Thyroid gland (tissue), 4 donors: ENCODE measurements at regions of chr9 and their contacts with region 1.

Region 1: GRCh38 chr9:132406554-132407122 is at the start of gene TTF1:
- DNase-seq: peak; percentile 88 to 91
- H3K4me3 ChIP-seq: peak within 1 kb of the TSS; percentile 55 to 97 (median 67)
- H3K27ac ChIP-seq: no peak within 1 kb of the TSS
- H3K4me1 ChIP-seq: peaks cover 27 to 36% of the 10 kb centered on the region in 2 donors
- H3K27me3 ChIP-seq: peaks cover under 1% of the 10 kb centered on the region
- CTCF ChIP-seq: no peak
- POLR2A ChIP-seq: peak in 1 of 2 donors; percentile 49
- total RNA-seq, gene TTF1: 10.8 to 19.3 (median 13.6) TPM

Region 2: GRCh38 chr9:132354637-132355355 is 51.8 kb before region 1 on chr9 and contains the start of gene SETX:
- intact Hi-C with region 1: loop called (anchors 5 kb)
- DNase-seq: peak; percentile 98 to 99
- H3K4me3 ChIP-seq: peak within 1 kb of the TSS; percentile 34 to 83 (median 76)
- H3K27ac ChIP-seq: peak within 1 kb of the TSS; percentile 93 to 95 (median 94)
- H3K4me1 ChIP-seq: peaks cover 34 to 39% of the 10 kb centered on the region in 2 donors
- H3K27me3 ChIP-seq: no peaks in the 10 kb centered on the region
- CTCF ChIP-seq: peak in 1 of 6 experiments; percentile 5
- POLR2A ChIP-seq: peak; percentile 83 to 98
- total RNA-seq, gene SETX: 132 to 192 (median 170) TPM

Region 3: GRCh38 chr9:132531187-132531586 is 124.5 kb after region 1 on chr9:
- intact Hi-C with region 1: no loop called
- DNase-seq: no peak
- H3K4me3 ChIP-seq: no peak overlapping the region
- H3K27ac ChIP-seq: no peak overlapping the region
- H3K4me1 ChIP-seq: no peaks in the 10 kb centered on the region
- H3K27me3 ChIP-seq: no peaks in the 10 kb centered on the region
- CTCF ChIP-seq: no peak
- POLR2A ChIP-seq: no peak

Region 4: DNA sequence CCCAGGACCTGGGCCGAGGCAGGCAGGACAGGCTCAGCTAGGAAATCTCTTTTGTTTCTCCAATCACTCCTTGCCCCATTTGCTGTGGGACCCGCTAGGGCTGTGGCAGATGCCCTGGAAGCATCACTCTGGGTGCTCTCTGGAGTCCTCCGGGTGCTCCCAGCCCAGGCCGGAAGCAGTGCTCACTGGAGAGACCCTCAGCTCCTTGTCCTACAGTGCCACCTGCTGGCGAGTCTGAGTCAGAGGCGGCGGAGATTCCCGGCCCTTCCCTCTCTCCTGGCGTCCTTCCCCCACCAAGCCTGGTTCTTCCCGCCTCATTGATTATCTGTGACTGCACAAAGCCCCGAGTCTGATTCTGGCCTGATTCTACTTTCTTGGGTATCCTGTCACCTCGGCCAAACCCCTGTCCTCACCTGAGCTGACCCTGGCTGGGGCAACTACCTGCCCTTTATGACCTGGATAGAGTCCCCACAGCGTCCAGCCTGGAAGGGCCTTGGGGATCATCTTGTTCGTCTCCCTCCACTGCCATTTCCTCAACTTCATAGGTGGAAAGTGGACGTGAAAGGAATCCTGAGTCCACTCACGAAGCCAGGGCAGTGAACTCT is 168.5 kb after region 1 on chr9:
- intact Hi-C with region 1: loop called (anchors 5 kb)
- DNase-seq: peak; percentile 76 to 80
- H3K4me3 ChIP-seq: no peak overlapping the region
- H3K27ac ChIP-seq: no peak overlapping the region
- H3K4me1 ChIP-seq: no peaks in the 10 kb centered on the region
- H3K27me3 ChIP-seq: peaks cover 16% of the 10 kb centered on the region
- CTCF ChIP-seq: peak; percentile 41 to 90 (median 79)
- POLR2A ChIP-seq: no peak

Region 5: DNA sequence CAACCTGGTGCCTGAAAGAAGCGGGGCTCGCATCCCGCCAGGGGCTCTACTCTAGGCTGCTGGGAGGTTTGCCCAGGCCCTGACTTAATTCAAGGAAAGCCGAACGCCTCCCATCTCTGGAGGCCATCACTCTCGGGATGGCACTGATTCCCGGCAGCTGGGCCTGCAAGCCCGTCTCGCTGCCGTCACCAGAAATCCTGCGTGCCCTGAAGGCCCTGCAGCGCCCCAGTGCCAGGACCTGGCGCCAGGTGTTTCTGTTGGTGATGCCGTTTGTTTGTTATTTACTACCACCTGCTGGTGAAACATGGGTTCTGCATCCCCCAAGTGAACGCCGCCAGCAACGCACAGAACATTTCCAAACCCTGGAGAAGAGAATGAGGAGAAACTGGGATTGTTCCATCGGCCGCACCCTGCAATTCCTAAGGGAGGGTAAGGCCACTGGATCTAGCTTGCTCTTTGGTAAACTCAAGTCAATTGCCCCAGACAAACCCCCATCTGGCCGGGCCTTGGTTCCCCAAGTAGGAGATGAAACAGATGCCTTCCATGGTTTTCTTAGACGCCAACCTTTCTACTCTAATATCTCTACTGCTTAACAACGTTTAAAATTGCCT is 393.5 kb after region 1 on chr9:
- intact Hi-C with region 1: loop called (anchors 10 kb)
- DNase-seq: peak; percentile 79 to 81
- H3K4me3 ChIP-seq: no peak overlapping the region
- H3K27ac ChIP-seq: no peak overlapping the region
- H3K4me1 ChIP-seq: peaks cover 0 to 5% of the 10 kb centered on the region in 2 donors
- H3K27me3 ChIP-seq: no peaks in the 10 kb centered on the region
- CTCF ChIP-seq: peak; percentile 70 to 92 (median 87)
- POLR2A ChIP-seq: no peak